ENCODE measurements at regions of chr6 and their contacts with region 1.

Region 1: DNA sequence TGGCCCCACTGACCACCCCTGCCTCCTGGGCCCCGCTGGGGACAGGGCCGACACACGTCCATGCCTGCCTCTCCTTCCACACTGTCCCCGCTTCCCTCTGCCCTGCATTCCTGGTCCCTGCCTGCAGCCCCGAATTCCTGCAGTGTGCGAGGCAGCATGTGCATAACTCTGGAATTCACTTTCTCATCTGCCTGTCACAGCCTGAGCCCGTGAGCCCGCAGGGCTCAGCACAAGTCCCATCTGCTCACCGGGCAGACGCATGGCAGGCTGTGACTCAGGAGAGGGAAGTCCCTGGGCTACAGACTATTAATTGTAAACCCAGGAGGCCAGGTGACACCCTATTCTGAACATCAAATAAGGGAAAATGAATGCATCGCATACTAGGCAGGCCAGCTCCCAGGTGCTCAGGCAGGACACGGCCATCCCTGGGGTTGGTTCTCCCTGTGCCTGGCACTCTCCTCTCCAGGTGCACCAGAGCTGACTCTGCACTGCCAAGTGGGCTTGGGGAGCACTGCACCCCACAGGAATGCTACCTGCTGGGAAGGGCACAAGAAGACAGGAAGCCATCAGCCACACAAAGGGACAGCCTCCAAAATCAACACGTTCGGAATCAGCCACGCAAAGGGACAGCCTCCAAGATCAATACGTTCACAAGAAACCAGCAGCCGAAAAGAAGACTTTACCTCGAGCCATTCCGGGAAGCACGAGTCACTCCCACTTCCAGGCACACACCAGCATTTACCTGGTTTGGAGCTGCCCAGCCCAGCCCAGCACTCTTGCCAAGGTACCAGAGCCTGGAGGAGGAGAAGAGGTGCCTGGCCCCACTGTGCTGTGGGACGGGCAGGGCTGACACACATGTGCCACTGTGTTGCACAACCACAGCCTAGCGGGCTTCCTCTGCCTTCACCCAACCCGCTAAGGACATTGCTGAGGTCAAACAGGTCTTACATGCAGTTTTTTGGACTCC is 65.9 kb downstream of the DLL1 start:
- DNase-seq: peak; percentile 78 to 94 (median 89)
- ATAC-seq: peak; percentile 68 to 81 (median 74)
- H3K4me3 ChIP-seq: no peak overlapping the region
- H3K27ac ChIP-seq: peak overlapping the region; percentile 52 to 81 (median 75)
- H3K4me1 ChIP-seq: peaks cover 30 to 51% (median 39%) of the 10 kb centered on the region in 3 donors
- H3K27me3 ChIP-seq: no peaks in the 10 kb centered on the region
- CTCF ChIP-seq: no peak

Region 2: GRCh38 chr6:170265655-170266054 is 40.7 kb after region 1 on chr6:
- intact Hi-C with region 1: loop called in 1 of 3 experiments (anchors 5 kb)
- DNase-seq: peak; percentile 89 to 98 (median 95)
- ATAC-seq: peak; percentile 73 to 82 (median 81)
- H3K4me3 ChIP-seq: peak overlapping the region in 2 of 4 donors; percentile 20 to 30
- H3K27ac ChIP-seq: peak overlapping the region; percentile 74 to 89 (median 81)
- H3K4me1 ChIP-seq: peaks cover 8 to 11% (median 9%) of the 10 kb centered on the region in 3 donors
- H3K27me3 ChIP-seq: no peaks in the 10 kb centered on the region
- CTCF ChIP-seq: no peak